ENCODE measurements at regions of chr10 and their contacts with region 1.

Region 1: DNA sequence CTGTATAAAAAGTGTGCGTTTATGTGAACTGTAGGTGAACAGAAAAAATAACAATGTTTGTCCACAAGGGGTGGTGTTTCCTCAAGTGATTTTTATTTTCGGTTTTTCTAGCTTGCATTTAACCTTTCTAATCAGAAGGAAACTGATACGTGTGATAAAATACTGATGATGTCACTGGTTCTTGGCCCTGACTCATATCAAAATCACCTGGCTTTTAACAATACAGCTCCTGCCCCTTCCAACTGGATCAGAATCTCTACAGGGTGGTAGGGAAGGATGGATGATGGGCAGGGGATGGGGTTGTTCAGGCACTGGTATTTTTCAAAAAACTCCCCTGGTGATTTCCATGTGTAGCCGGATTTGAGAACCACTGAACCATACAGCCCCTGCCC is 10.9 kb downstream of the NPFFR1 start:
- DNase-seq: no peak
- H3K4me3 ChIP-seq: no peak overlapping the region
- H3K27ac ChIP-seq: no peak overlapping the region
- H3K4me1 ChIP-seq: 0 out of 7 replicates have a peak, but pooled peaks cover 0 to 5% (median 0%) of the 10 kb centered on the region in 4 experiments
- H3K27me3 ChIP-seq: no peaks in the 10 kb centered on the region
- CTCF ChIP-seq: peak in 1 of 3 experiments; percentile 29; a peak in 2 of 4 replicates
- EP300 ChIP-seq: no peak
- POLR2A ChIP-seq: no peak
- RAD21 ChIP-seq: 0 out of 4 replicates have a peak, but pooled peaks of 1 of the 2 experiments have one; percentile 7

Region 2: GRCh38 chr10:70190581-70190980 is 82.3 kb before region 1 on chr10:
- CTCF ChIA-PET with region 1: no interaction called
- POLR2A ChIA-PET with region 1: no interaction called
- DNase-seq: no peak
- H3K4me3 ChIP-seq: no peak overlapping the region
- H3K27ac ChIP-seq: no peak overlapping the region
- H3K4me1 ChIP-seq: no peaks in the 10 kb centered on the region
- H3K27me3 ChIP-seq: 0 out of 7 replicates have a peak, but pooled peaks cover 0 to 3% (median 0%) of the 10 kb centered on the region in 4 experiments
- CTCF ChIP-seq: no peak
- EP300 ChIP-seq: no peak
- POLR2A ChIP-seq: no peak
- RAD21 ChIP-seq: no peak

Region 3: GRCh38 chr10:70255329-70256299 is 17.3 kb before region 1 on chr10:
- CTCF ChIA-PET with region 1: interaction called, 12 read pairs
- POLR2A ChIA-PET with region 1: no interaction called
- DNase-seq: no peak
- H3K4me3 ChIP-seq: no peak overlapping the region
- H3K27ac ChIP-seq: no peak overlapping the region
- H3K4me1 ChIP-seq: peaks cover 0 to 2% (median 0%) of the 10 kb centered on the region in 4 experiments; a peak in 1 of 7 replicates
- H3K27me3 ChIP-seq: no peaks in the 10 kb centered on the region
- CTCF ChIP-seq: no peak
- EP300 ChIP-seq: no peak
- POLR2A ChIP-seq: no peak
- RAD21 ChIP-seq: no peak

Region 4: DNA sequence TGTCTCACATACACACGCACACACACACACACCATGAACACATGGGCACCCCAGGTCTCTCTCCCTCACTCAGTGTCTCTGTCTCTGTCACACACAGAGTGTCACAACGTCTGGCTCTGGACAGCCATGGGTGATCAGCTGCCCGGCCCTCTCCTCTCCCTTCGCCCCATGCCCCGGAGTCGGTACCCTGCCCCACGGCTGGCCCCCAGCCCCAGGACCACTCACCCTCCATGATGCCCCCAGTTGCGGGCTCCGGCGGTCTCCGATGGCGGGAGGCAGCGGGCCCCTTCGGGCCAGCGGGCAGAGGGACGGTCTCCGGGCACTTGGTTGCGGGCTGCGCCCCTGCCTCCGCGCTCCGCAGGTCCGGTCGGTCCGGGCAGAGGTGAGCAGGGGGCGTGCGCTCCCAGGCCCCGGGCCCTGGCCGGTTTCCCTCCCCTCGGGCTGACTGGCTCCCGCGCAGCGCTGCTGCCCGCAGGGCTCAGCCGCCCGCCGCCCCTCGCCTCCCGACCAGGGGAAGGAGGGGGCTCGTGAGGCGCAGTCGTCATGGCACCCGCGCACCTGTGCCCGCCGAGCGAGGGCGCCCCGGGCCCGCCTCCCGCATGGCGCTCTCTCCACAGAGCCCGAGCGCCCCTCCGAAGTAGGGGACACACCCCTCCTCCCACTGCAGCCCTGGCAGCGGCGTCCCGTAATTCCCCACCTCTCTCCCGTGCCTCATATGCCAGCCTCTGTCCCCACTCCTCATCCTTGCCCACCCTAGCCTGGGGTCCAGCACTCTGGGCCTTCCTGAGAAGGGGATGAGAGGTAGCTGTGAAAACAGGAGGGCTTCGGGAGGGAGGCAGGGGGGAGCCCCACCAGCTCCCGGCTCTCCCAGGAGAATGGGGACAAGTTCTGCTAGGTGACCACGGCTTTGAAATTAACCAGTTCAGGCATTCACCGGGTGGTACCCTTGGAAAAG is 10.8 kb after region 1 on chr10 and contains the start of gene NPFFR1:
- CTCF ChIA-PET with region 1: interaction called, 31 read pairs
- POLR2A ChIA-PET with region 1: no interaction called
- DNase-seq: peak in 1 of 2 experiments; percentile 78
- H3K4me3 ChIP-seq: peak within 1 kb of the TSS; percentile 29 to 65 (median 46)
- H3K27ac ChIP-seq: no peak within 1 kb of the TSS
- H3K4me1 ChIP-seq: no peaks in the 10 kb centered on the region
- H3K27me3 ChIP-seq: peaks cover 14 to 36% (median 23%) of the 10 kb centered on the region in 4 experiments
- CTCF ChIP-seq: peak in 2 of 3 experiments; percentile 10 to 16; a peak in 2 of 4 replicates
- EP300 ChIP-seq: no peak
- POLR2A ChIP-seq: no peak
- RAD21 ChIP-seq: peak; percentile 12 to 21; a peak in 2 of 4 replicates
- total RNA-seq, gene NPFFR1: 0.06 TPM in 1 of 2 replicates, not detected in the other

Region 5: DNA sequence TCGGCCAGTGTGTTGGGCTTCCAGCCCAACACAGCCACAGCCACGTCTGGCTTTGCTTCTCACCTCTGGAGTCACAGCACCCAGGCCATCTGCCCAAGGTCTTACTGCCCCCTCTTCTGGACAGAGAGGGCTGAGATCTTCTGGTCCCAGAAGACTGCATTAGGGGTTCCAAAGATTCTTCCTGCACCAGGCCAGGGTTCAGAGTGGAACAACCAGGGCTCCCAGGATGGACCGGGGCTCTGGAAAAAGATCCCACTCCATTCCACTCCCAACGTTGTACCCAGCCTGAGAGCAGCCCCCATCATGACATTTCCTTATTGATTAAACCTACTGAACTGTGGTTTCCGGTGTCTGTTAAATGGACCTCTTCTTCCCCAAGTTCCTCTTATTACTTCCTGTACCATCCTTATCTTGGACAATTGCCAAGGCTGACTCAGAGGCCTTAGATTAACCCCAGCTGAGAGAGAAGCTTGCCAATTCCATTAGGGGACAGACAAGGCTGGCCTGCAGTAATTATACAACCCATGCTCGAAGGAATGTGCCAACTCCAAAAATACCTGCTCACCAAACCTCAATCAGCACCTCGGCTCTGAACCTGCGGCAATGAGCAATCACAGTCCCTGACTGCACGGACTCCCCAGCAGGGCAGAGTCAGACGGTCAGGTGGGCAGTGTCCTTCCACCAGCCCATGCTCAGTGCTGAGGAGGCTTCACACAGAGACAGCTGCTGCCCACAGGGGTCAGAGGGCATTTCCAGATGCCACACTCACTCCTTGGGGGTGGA is 58.8 kb after region 1 on chr10:
- CTCF ChIA-PET with region 1: interaction called, 10 read pairs
- POLR2A ChIA-PET with region 1: no interaction called
- DNase-seq: no peak
- H3K4me3 ChIP-seq: no peak overlapping the region
- H3K27ac ChIP-seq: no peak overlapping the region
- H3K4me1 ChIP-seq: peaks cover 0 to 2% (median under 1%) of the 10 kb centered on the region in 4 experiments; a peak in 3 of 7 replicates
- H3K27me3 ChIP-seq: no peaks in the 10 kb centered on the region
- CTCF ChIP-seq: peak; percentile 31 to 50 (median 37)
- EP300 ChIP-seq: no peak
- POLR2A ChIP-seq: no peak
- RAD21 ChIP-seq: peak; percentile 57 to 76